ENCODE measurements at regions of chr1 and their contacts with region 1.

Region 1: DNA sequence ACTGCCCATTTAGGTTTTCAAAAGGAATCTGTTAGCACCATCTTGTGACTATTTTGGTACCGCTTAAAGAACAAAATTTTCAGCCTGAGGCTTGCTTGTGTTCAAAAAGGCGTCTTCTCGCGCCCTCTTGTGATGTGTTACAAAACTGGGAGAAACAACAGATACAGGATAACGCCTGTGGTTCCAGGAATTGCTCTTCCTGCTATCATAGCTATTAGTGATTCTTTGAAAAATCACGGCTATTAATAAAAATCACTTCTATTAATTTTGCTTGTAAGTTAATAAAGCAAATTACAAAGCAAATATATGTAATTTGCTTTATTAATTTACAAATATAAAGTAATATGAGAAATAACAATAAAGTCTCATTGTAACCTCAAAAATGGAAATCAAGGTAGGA is 82.2 kb upstream of the ABCD3 start:
- DNase-seq: peak; percentile 57
- H3K27ac ChIP-seq: no peak overlapping the region
- CTCF ChIP-seq: peak; percentile 93

Region 2: DNA sequence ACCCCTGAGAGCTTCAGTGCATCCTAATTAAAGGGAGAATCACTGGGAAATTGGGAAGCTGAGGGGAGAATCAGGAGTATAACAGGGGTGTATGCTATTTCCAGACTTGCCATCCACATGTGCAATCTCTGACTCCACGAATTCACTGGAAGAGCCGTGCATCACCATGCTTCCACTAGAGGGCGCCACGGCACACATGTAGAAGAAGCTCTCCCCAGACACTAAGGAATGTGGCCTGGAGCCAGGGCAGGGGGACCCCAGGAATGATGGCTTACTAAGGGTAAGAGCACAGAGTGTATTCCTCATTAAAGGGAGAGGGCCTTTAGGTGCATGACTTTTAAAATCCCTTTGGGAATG is 296.5 kb before region 1 on chr1:
- CTCF ChIA-PET with region 1: interaction called, 87 read pairs
- POLR2A ChIA-PET with region 1: no interaction called
- DNase-seq: peak; percentile 52
- H3K27ac ChIP-seq: no peak overlapping the region
- CTCF ChIP-seq: peak; percentile 86

Region 3: GRCh38 chr1:94061513-94062443 is 274.2 kb before region 1 on chr1:
- CTCF ChIA-PET with region 1: interaction called, 111 read pairs
- POLR2A ChIA-PET with region 1: no interaction called
- DNase-seq: peak; percentile 88
- H3K27ac ChIP-seq: no peak overlapping the region
- CTCF ChIP-seq: peak; percentile 77

Region 4: GRCh38 chr1:94237291-94238226 is 98.4 kb before region 1 on chr1 and contains the start of gene ARHGAP29:
- CTCF ChIA-PET with region 1: interaction called, 20 read pairs
- POLR2A ChIA-PET with region 1: no interaction called
- DNase-seq: peak; percentile 84
- H3K27ac ChIP-seq: peak within 1 kb of the TSS; percentile 92
- CTCF ChIP-seq: no peak